ENCODE measurements at regions of chr2 and their contacts with region 1.

Region 1: GRCh38 chr2:27050281-27050995 is 1.0 kb upstream of the AGBL5 start:
- DNase-seq: peak; percentile 90 to 92
- H3K4me3 ChIP-seq: peak overlapping the region; percentile 82 to 97 (median 97)
- H3K27ac ChIP-seq: peak overlapping the region; percentile 93 to 96
- H3K4me1 ChIP-seq: no peaks in the 10 kb centered on the region
- H3K27me3 ChIP-seq: no peaks in the 10 kb centered on the region
- CTCF ChIP-seq: peak; percentile 46 to 66 (median 54)
- POLR2A ChIP-seq: no peak

Region 2: DNA sequence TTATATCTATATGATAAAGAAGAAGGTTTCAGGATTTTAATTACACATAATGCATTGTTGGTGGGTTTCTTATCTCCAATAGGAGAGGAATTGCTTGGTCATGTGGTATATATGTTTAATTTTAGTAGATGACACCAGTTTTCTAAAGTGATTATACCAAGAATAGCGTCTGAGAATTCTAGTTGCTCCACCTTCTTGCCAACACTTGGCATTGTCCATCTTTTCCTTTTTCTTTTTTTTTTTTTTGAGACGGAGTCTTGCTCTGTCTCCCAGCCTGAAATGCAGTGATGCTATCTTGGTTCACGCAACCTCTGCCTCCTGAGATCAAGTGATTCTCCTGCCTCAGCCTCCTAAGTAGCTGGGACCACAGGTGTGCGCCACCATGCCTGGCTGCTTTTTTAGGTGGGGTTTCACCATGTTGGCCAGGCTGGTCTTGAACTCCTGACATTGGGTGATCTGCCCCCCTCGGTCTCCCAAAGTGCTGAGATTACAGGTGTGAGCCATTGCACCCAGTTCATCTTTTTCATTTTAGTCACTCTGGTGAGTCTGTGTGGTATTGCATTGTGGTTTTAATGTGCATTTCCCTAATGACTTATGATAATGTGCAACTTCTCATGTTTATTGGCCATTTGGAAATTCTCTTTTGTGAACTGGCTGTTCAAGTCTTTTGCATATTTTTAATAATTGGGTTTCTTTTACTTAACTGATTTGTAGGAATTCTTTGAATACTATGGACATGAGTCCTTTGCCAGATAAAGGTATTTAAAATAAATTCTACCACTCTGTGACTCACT is 495.1 kb after region 1 on chr2:
- intact Hi-C with region 1: no loop called
- DNase-seq: no peak
- H3K4me3 ChIP-seq: no peak overlapping the region
- H3K27ac ChIP-seq: no peak overlapping the region
- H3K4me1 ChIP-seq: no peaks in the 10 kb centered on the region
- H3K27me3 ChIP-seq: no peaks in the 10 kb centered on the region
- CTCF ChIP-seq: no peak
- POLR2A ChIP-seq: no peak

Region 3: GRCh38 chr2:27756544-27757498 is 706.4 kb after region 1 on chr2:
- intact Hi-C with region 1: loop called (anchors 5 kb)
- DNase-seq: no peak
- H3K4me3 ChIP-seq: no peak overlapping the region
- H3K27ac ChIP-seq: no peak overlapping the region
- H3K4me1 ChIP-seq: no peaks in the 10 kb centered on the region
- H3K27me3 ChIP-seq: no peaks in the 10 kb centered on the region
- CTCF ChIP-seq: no peak
- POLR2A ChIP-seq: no peak

Measured in breast epithelium (tissue), 4 donors.